Activated CD4-positive, alpha-beta memory T cell treated with anti-CD3 and anti-CD28 coated beads, Interleukin-2, amount 10 ng/mL, durations not matched to agents 7 days and 5 days (primary cell): ENCODE measurements at regions of chr10 and their contacts with region 1.

Region 1: GRCh38 chr10:17430647-17431355 is 23.6 kb downstream of the ST8SIA6 start:
- DNase-seq: peak; percentile 63
- H3K4me3 Mint-ChIP-seq: no peak overlapping the region
- H3K27ac Mint-ChIP-seq: no peak overlapping the region
- H3K4me1 Mint-ChIP-seq: peaks cover 59% of the 10 kb centered on the region
- H3K27me3 Mint-ChIP-seq: peaks cover 13% of the 10 kb centered on the region

Region 2: DNA sequence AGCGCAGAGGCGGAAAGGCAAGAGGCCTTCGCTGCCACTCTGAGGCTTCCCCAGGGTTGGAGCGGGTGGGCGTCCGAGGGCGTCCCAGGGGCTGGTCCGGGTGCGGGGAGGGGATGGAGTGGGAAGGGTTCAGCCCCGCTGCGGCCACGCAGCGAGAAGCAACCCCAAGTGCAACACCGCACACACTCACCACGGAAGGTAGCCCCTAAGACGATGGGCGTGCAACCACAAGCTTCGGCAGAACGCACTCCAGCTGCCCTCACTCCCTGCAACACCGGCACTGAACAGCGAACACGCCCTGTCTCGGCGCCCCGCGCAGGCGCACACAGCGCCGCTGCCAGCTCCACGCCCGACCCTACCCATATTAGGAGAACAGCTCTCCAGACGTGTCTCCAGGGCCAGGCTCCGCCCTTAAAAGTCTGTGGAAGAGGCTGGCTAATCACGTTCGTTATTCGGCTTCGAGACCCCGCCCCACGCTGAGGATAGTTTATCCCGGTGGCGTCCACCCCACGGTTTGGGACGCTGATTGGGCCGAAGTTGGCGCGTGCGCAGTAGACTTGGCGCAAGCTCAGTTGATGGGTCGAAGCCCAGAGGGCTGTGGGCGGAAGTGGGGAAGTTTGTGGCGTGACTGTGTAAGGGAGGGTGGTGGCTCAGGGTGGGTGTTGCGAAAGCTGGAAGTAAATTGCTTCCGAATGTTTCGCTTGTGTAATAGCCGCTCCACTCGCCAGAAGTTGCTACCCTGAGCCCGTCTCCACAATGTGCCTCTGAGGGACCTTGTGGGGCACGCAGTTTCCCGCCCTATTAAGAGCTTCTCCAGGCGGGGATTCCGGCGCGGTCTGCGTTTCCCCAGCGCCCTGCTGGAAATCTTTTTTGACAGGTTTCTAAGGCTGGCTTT is 613.4 kb before region 1 on chr10 and contains the start of gene RSU1:
- CTCF ChIA-PET with region 1: interaction called, 3 read pairs
- POLR2A ChIA-PET with region 1: interaction called, 14 read pairs
- DNase-seq: peak; percentile 100
- H3K4me3 Mint-ChIP-seq: peak within 1 kb of the TSS; percentile 85
- H3K27ac Mint-ChIP-seq: peak within 1 kb of the TSS; percentile 92
- H3K4me1 Mint-ChIP-seq: peaks cover 40% of the 10 kb centered on the region
- H3K27me3 Mint-ChIP-seq: peaks cover 4% of the 10 kb centered on the region
- total RNA-seq, gene RSU1: 74.3 to 74.9 TPM

Region 3: GRCh38 chr10:17409170-17409733 is 21.5 kb before region 1 on chr10:
- CTCF ChIA-PET with region 1: interaction called, 114 read pairs
- POLR2A ChIA-PET with region 1: interaction called, 13 read pairs
- DNase-seq: no peak
- H3K4me3 Mint-ChIP-seq: no peak overlapping the region
- H3K27ac Mint-ChIP-seq: no peak overlapping the region
- H3K4me1 Mint-ChIP-seq: peaks cover 10% of the 10 kb centered on the region
- H3K27me3 Mint-ChIP-seq: peaks cover 6% of the 10 kb centered on the region

Region 4: GRCh38 chr10:17504547-17505245 is 73.9 kb after region 1 on chr10:
- CTCF ChIA-PET with region 1: interaction called, 14 read pairs
- POLR2A ChIA-PET with region 1: interaction called, 55 read pairs
- DNase-seq: no peak
- H3K4me3 Mint-ChIP-seq: peak overlapping the region; percentile 57
- H3K27ac Mint-ChIP-seq: peak overlapping the region; percentile 91
- H3K4me1 Mint-ChIP-seq: peaks cover 58% of the 10 kb centered on the region
- H3K27me3 Mint-ChIP-seq: no peaks in the 10 kb centered on the region

Region 5: GRCh38 chr10:17512341-17513001 is 81.7 kb after region 1 on chr10:
- CTCF ChIA-PET with region 1: interaction called, 14 read pairs
- POLR2A ChIA-PET with region 1: interaction called, 55 read pairs
- DNase-seq: no peak
- H3K4me3 Mint-ChIP-seq: no peak overlapping the region
- H3K27ac Mint-ChIP-seq: peak overlapping the region; percentile 59
- H3K4me1 Mint-ChIP-seq: peaks cover 55% of the 10 kb centered on the region
- H3K27me3 Mint-ChIP-seq: no peaks in the 10 kb centered on the region